Activated CD4-positive, alpha-beta T cell treated with anti-CD3 and anti-CD28 coated beads for 36 hours (primary cell): ENCODE measurements at regions of chr11 and their contacts with region 1.

Region 1: DNA sequence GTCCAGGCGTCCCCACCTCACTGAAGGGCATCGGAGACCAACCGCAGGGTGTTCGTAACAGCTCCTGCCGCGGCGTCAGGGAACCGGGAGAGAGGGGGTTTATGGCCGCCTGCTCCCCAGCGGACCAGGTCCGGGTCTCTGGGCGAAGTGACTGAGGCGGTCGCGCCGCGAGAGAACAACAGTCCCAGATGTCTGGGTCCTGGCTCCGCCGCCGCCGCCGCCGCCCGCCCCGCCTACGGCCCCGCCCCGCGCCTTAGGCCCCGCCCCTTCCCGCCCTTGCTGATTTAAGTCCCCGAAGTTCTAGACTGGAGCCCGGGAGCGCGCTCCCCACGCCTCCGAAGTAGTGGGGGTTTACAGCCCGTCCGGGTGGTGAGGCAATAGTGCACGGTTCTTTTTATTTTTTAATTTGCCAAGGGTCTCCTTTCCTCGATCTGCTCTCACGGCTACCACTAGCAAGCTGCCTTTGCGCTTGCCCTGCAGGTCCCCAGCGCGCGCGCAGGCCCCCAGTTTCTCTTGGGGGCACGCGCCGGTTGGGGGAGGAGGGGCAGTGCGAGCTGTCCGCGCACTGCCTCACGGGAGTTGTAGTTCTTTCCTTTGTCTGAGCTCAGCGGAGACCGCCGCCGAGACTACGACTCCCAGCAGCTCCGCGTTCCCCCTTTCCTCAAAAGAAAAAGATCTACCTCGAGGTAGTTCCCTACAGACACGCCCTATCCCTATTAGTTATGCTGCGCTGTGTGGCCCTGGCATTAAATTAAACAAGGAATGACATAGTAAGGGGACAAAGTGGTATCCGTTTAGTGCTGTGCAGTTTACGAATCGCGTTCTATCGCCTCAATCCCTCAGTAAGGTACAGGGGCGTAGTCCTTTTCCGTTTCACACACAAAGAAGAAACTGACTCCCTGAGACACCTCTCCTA is at the start of gene PGM2L1:
- DNase-seq: peak; percentile 96
- ATAC-seq: peak; percentile 88
- H3K4me3 Mint-ChIP-seq: peak within 1 kb of the TSS; percentile 92
- H3K27ac Mint-ChIP-seq: peak within 1 kb of the TSS; percentile 100
- H3K4me1 Mint-ChIP-seq: peaks cover 39% of the 10 kb centered on the region
- H3K27me3 Mint-ChIP-seq: no peaks in the 10 kb centered on the region
- total RNA-seq, gene PGM2L1: 8.8 to 11.0 TPM

Region 2: DNA sequence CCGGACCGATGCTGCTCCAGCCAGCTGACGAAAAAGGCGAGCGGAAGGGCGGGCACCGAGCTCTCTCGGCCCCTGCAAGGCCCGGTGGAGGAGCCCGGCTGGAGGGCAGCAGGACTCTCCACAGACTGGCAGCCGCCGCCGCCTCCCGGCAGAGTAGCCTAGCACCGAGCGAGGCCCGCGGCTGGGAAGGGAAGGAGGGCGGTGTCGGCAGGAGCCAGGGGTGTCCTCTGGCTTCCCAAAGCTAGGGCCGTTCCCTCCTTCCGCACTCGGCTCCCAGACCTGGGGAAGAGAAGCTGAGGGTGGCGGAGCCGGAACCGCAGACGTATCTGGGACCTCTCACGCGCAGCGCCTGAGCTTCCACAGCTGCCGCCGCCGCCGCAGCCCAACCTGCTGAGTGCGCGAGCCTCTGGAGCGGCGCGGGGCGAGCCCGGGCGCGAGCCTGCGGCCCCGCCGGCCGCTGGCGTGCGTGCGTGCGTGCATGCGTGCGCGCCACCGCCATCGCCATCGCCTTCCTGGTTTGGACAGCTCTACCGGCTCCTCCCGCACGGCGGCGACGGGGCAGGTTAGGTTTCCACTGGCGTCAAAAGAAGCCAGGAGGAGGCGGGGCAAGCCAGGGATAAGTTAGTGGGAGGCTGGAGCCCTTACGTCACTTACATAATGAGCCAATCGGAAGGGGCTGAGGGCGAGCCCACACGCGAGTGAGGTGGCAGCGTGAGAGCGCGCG is 637.7 kb before region 1 on chr11 and contains the start of gene RAB6A:
- CTCF ChIA-PET with region 1: interaction called, 4 read pairs
- POLR2A ChIA-PET with region 1: no interaction called
- intact Hi-C with region 1: loop called in 1 of 2 experiments (anchors 1 kb)
- DNase-seq: peak; percentile 100
- ATAC-seq: peak; percentile 93
- H3K4me3 Mint-ChIP-seq: peak within 1 kb of the TSS; percentile 97
- H3K27ac Mint-ChIP-seq: peak within 1 kb of the TSS; percentile 86
- H3K4me1 Mint-ChIP-seq: peaks cover 22% of the 10 kb centered on the region
- H3K27me3 Mint-ChIP-seq: no peaks in the 10 kb centered on the region
- total RNA-seq, gene RAB6A: 57.9 to 58.9 TPM

Region 3: GRCh38 chr11:73876424-73877300 is 521.8 kb before region 1 on chr11 and contains the starts of genes COA4 and PAAF1:
- CTCF ChIA-PET with region 1: no interaction called
- POLR2A ChIA-PET with region 1: no interaction called
- intact Hi-C with region 1: loop called in 1 of 2 experiments (anchors 2 kb)
- DNase-seq: peak; percentile 97
- ATAC-seq: peak; percentile 95
- H3K4me3 Mint-ChIP-seq: peak within 1 kb of the TSS; percentile 93
- H3K27ac Mint-ChIP-seq: peak within 1 kb of the TSS; percentile 100
- H3K4me1 Mint-ChIP-seq: peaks cover 32% of the 10 kb centered on the region
- H3K27me3 Mint-ChIP-seq: no peaks in the 10 kb centered on the region
- total RNA-seq, gene COA4: 103 to 112 TPM
- total RNA-seq, gene PAAF1: 34.2 to 34.8 TPM

Region 4: GRCh38 chr11:74162681-74163467 is 235.6 kb before region 1 on chr11:
- CTCF ChIA-PET with region 1: no interaction called
- POLR2A ChIA-PET with region 1: no interaction called
- intact Hi-C with region 1: no loop called
- DNase-seq: no peak
- ATAC-seq: peak; percentile 47
- H3K4me3 Mint-ChIP-seq: no peak overlapping the region
- H3K27ac Mint-ChIP-seq: no peak overlapping the region
- H3K4me1 Mint-ChIP-seq: peaks cover 10% of the 10 kb centered on the region
- H3K27me3 Mint-ChIP-seq: no peaks in the 10 kb centered on the region

Region 5: GRCh38 chr11:74412321-74412720 is 13.8 kb after region 1 on chr11:
- CTCF ChIA-PET with region 1: interaction called, 5 read pairs
- POLR2A ChIA-PET with region 1: no interaction called
- intact Hi-C with region 1: loop called (anchors 1 to 2 kb)
- DNase-seq: no peak
- ATAC-seq: no peak
- H3K4me3 Mint-ChIP-seq: no peak overlapping the region
- H3K27ac Mint-ChIP-seq: no peak overlapping the region
- H3K4me1 Mint-ChIP-seq: peaks cover 26% of the 10 kb centered on the region
- H3K27me3 Mint-ChIP-seq: no peaks in the 10 kb centered on the region

Region 6: DNA sequence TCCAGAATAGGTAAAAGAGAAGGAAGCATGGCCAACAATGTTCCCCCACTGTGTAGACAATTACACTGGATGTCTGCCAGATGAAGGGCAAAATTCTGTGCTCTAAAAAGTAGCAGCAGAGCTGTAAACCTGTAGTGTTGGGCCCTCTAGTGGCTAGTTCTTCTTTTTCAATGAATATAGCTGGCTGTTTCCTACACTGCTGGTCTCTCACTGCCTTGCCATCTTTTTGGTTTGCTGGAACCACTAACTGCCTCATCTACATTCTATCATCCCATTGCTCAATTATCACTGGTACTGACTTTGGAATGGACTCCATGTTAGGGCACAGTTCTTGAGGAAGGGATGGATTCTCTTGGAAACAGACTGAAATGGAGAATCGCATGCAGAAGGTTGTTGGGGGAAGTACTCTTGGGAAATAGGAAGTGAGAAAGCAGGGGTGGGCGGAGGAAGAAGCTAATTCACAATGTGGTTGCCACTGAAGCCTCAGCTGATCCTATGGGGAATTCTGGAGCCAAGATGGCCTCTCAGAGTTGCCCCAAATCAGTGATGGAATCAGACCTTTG is 50.9 kb after region 1 on chr11:
- CTCF ChIA-PET with region 1: interaction called, 102 read pairs
- POLR2A ChIA-PET with region 1: interaction called, 5 read pairs
- intact Hi-C with region 1: no loop called
- DNase-seq: peak; percentile 47
- ATAC-seq: peak; percentile 94
- H3K4me3 Mint-ChIP-seq: no peak overlapping the region
- H3K27ac Mint-ChIP-seq: no peak overlapping the region
- H3K4me1 Mint-ChIP-seq: peaks cover 4% of the 10 kb centered on the region
- H3K27me3 Mint-ChIP-seq: peaks cover 6% of the 10 kb centered on the region

Region 7: GRCh38 chr11:74748211-74749127 is 350.0 kb after region 1 on chr11 and contains the start of gene RNF169:
- CTCF ChIA-PET with region 1: no interaction called
- POLR2A ChIA-PET with region 1: no interaction called
- intact Hi-C with region 1: loop called in 1 of 2 experiments (anchors 2 kb)
- DNase-seq: peak; percentile 93
- ATAC-seq: peak; percentile 97
- H3K4me3 Mint-ChIP-seq: peak within 1 kb of the TSS; percentile 80
- H3K27ac Mint-ChIP-seq: peak within 1 kb of the TSS; percentile 73
- H3K4me1 Mint-ChIP-seq: peaks cover 29% of the 10 kb centered on the region
- H3K27me3 Mint-ChIP-seq: no peaks in the 10 kb centered on the region
- total RNA-seq, gene RNF169: 15.3 to 16.0 TPM

Region 8: GRCh38 chr11:74988541-74989260 is 590.2 kb after region 1 on chr11 and contains the start of gene NEU3:
- CTCF ChIA-PET with region 1: no interaction called
- POLR2A ChIA-PET with region 1: no interaction called
- intact Hi-C with region 1: loop called in 1 of 2 experiments (anchors 10 kb)
- DNase-seq: peak; percentile 91
- ATAC-seq: peak; percentile 97
- H3K4me3 Mint-ChIP-seq: peak within 1 kb of the TSS; percentile 85
- H3K27ac Mint-ChIP-seq: peak within 1 kb of the TSS; percentile 77
- H3K4me1 Mint-ChIP-seq: peaks cover 31% of the 10 kb centered on the region
- H3K27me3 Mint-ChIP-seq: no peaks in the 10 kb centered on the region
- total RNA-seq, gene NEU3: 12.0 to 13.9 TPM